ENCODE measurements at regions of chr1 and their contacts with region 1.

Region 1: GRCh38 chr1:95927061-95927460 is 693.1 kb downstream of the RWDD3 start:
- DNase-seq: no peak
- ATAC-seq: no peak
- H3K4me3 ChIP-seq: no peak overlapping the region
- H3K27ac ChIP-seq: no peak overlapping the region
- H3K4me1 ChIP-seq: no peaks in the 10 kb centered on the region
- H3K27me3 ChIP-seq: no peaks in the 10 kb centered on the region
- CTCF ChIP-seq: no peak

Region 2: DNA sequence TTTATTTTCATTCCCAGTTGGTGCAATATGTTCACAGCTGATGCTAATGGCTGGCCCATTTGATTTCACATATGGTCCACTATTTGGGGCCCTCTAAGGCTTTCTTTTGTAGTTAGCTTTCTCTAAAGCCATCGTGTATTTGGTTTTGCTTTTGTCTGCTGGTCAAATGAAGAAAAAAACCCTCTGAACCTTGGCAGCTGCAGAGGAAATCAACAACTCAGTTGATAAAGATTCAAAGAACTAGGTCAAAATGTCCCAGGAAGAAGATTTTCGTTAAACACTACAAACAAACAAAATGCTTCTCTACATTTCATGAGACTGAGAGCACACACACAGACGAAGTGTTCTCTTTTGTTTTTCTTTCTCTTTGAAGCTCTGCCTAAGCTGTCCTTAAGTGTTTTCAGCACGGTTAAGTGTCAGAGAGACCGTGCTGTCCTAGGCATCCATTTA is 38.1 kb before region 1 on chr1:
- intact Hi-C with region 1: loop called in 1 of 10 experiments (anchors 1 kb)
- DNase-seq: no peak
- ATAC-seq: peak in 2 of 8 donors; percentile 20 to 75
- H3K4me3 ChIP-seq: peak overlapping the region in 5 of 10 donors; percentile 5 to 22 (median 9)
- H3K27ac ChIP-seq: peak overlapping the region in 1 of 10 donors; percentile 56
- H3K4me1 ChIP-seq: peaks cover 0 to 5% (median 0%) of the 10 kb centered on the region in 9 donors
- H3K27me3 ChIP-seq: no peaks in the 10 kb centered on the region
- CTCF ChIP-seq: no peak

Region 3: GRCh38 chr1:95957748-95958147 is 30.7 kb after region 1 on chr1:
- intact Hi-C with region 1: no loop called
- DNase-seq: no peak
- ATAC-seq: no peak
- H3K4me3 ChIP-seq: no peak overlapping the region
- H3K27ac ChIP-seq: no peak overlapping the region
- H3K4me1 ChIP-seq: no peaks in the 10 kb centered on the region
- H3K27me3 ChIP-seq: no peaks in the 10 kb centered on the region
- CTCF ChIP-seq: no peak

Region 4: GRCh38 chr1:95984798-95985374 is 57.8 kb after region 1 on chr1:
- intact Hi-C with region 1: no loop called
- DNase-seq: no peak
- ATAC-seq: no peak
- H3K4me3 ChIP-seq: no peak overlapping the region
- H3K27ac ChIP-seq: no peak overlapping the region
- H3K4me1 ChIP-seq: no peaks in the 10 kb centered on the region
- H3K27me3 ChIP-seq: no peaks in the 10 kb centered on the region
- CTCF ChIP-seq: no peak

Region 5: GRCh38 chr1:96730574-96731298 is 803.7 kb after region 1 on chr1:
- intact Hi-C with region 1: no loop called
- DNase-seq: no peak
- ATAC-seq: peak in 2 of 8 donors; percentile 24 to 46
- H3K4me3 ChIP-seq: no peak overlapping the region
- H3K27ac ChIP-seq: peak overlapping the region in 1 of 10 donors; percentile 21
- H3K4me1 ChIP-seq: peaks cover 0 to 45% (median 29%) of the 10 kb centered on the region in 9 donors
- H3K27me3 ChIP-seq: no peaks in the 10 kb centered on the region
- CTCF ChIP-seq: no peak